OCI-LY7 (cell line): ENCODE measurements at regions of chr3 and their contacts with region 1.

Region 1: GRCh38 chr3:25768851-25769250 is 14.4 kb downstream of the NGLY1 start:
- DNase-seq: no peak
- H3K4me3 ChIP-seq: no peak overlapping the region
- H3K27ac ChIP-seq: no peak overlapping the region
- H3K4me1 ChIP-seq: peaks cover 9% of the 10 kb centered on the region
- CTCF ChIP-seq: no peak

Region 2: DNA sequence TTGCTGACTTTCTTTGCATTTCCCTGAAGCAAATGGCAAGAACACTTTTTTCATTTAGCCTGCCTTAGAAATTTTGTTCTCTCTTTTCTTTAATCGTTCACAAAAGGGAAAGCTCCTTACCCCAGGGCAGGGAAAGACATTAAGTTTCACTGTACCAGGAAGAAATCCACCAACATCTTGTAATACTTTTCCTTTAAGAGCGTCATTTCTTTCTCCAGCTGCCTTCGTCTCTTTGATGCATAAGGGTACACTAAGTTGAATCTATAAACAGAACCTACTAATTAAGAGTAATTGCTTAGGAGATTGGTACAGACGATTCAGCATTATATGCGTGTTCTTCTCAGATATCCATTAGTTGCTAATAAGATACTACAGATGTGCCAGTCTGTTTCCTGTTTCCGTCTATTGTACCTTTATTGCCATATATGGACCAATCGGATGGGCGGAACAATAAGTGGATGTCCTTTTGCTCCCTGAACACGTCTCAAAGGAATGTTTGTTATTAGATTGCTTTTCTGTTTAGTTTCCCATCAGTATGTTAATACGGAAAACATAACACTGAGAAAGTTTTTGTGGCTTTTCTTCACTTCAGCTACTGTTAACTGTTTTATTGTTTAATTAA is 617.5 kb before region 1 on chr3:
- CTCF ChIA-PET with region 1: no interaction called
- POLR2A ChIA-PET with region 1: no interaction called
- intact Hi-C with region 1: no loop called
- DNase-seq: no peak
- H3K4me3 ChIP-seq: no peak overlapping the region
- H3K27ac ChIP-seq: no peak overlapping the region
- H3K4me1 ChIP-seq: no peaks in the 10 kb centered on the region
- CTCF ChIP-seq: no peak

Region 3: DNA sequence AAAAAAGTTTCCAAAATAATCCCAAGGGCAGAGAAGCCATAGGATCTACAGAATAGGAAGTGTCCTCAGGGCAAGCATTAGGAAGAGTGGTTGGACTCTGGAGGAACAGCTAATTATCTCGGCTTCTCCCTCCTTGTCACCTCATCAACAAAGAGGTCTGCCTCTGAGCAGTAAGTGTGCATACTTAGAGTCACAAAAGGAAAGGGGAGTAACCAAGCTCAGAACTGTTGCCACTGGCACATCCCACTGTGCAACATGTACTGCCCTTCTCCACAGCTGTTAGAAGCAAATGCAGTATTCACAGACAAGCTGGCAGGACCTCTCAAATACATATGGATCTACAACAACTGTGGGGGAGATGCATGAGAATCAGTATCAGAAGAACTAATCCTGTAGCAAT is 17.1 kb before region 1 on chr3:
- CTCF ChIA-PET with region 1: no interaction called
- POLR2A ChIA-PET with region 1: interaction called, 10 read pairs
- intact Hi-C with region 1: no loop called
- DNase-seq: no peak
- H3K4me3 ChIP-seq: no peak overlapping the region
- H3K27ac ChIP-seq: no peak overlapping the region
- H3K4me1 ChIP-seq: no peaks in the 10 kb centered on the region
- CTCF ChIP-seq: no peak

Region 4: DNA sequence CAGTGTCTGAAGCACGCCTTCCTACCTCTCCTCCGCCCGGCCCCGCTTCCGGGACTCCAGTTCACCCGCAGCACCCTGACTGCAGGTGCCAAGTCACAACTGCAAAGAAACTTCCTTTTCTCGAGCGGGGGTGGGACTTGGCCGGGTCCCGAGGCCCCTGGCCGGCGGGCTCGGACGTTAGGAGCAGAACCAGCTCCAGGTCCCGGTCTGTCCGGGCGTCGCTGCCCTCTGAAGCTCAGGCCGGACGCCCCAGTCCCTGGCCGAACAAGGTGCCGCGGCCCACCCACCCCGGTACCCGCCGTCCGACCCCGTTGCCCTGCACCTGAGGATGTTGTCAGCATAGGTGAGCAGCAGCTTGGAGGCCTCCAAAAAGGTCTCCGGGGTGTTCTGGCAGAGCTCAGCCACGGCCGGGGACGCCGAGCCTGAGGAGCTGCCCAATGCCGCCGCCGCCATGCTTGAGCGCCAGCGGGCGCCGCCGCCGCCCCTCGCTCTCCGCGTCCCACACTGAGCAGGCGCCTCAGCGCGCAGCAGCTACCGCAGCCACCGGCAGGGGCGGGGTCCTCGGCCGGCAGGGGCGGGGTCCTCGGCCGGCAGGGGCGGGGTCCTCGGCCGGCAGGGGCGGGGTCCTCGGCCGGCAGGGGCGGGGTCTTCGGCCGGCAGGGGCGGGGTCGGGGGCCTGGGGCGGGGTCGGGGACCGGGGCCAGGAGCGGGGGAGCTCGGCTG is 14.2 kb after region 1 on chr3 and contains the start of gene NGLY1:
- CTCF ChIA-PET with region 1: no interaction called
- POLR2A ChIA-PET with region 1: interaction called, 11 read pairs
- intact Hi-C with region 1: no loop called
- DNase-seq: peak; percentile 91
- H3K4me3 ChIP-seq: peak within 1 kb of the TSS; percentile 90
- H3K27ac ChIP-seq: peak within 1 kb of the TSS; percentile 90
- H3K4me1 ChIP-seq: peaks cover 58% of the 10 kb centered on the region
- CTCF ChIP-seq: no peak
- total RNA-seq, gene NGLY1: 88.1 and 97.5 TPM in 2 replicates

Region 5: GRCh38 chr3:26118165-26118564 is 349.3 kb after region 1 on chr3:
- CTCF ChIA-PET with region 1: no interaction called
- POLR2A ChIA-PET with region 1: no interaction called
- intact Hi-C with region 1: no loop called
- DNase-seq: peak; percentile 68
- H3K4me3 ChIP-seq: no peak overlapping the region
- H3K27ac ChIP-seq: no peak overlapping the region
- H3K4me1 ChIP-seq: no peaks in the 10 kb centered on the region
- CTCF ChIP-seq: peak; percentile 76

Region 6: GRCh38 chr3:26652164-26652563 is 883.3 kb after region 1 on chr3:
- CTCF ChIA-PET with region 1: no interaction called
- POLR2A ChIA-PET with region 1: no interaction called
- intact Hi-C with region 1: no loop called
- DNase-seq: no peak
- H3K4me3 ChIP-seq: no peak overlapping the region
- H3K27ac ChIP-seq: no peak overlapping the region
- H3K4me1 ChIP-seq: no peaks in the 10 kb centered on the region
- CTCF ChIP-seq: no peak